ENCODE measurements at regions of chr20 and their contacts with region 1.

Region 1: DNA sequence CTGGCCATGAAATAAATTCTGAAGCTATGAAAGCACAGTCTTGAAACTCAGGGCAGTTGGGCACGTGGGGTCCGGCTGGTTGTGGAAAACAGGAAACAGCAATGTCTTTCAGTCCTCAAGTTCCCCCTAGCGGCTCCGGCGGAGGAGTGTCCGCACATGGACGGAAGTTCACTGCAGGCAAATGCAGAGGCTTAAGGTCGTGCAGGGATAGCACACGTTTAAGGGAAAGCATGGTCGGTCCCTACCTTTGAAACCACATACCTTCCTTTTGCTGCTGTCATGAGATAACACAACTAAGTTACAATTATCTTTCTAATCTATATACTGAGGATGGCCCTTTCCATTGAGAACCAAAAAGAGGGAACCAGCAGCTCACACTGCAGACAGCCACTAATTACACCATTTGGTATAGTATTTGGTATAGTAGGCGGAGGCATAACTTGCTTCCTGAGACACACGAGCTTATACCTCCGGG is 52.6 kb upstream of the NFATC2 start:
- DNase-seq: peak; percentile 97

Region 2: GRCh38 chr20:51393571-51393970 is 201.5 kb before region 1 on chr20:
- in situ Hi-C with region 1: loop called (anchors 10 kb)
- DNase-seq: no peak

Region 3: GRCh38 chr20:51497542-51498478 is 97.3 kb before region 1 on chr20:
- in situ Hi-C with region 1: loop called (anchors 10 kb)
- DNase-seq: peak; percentile 79

Region 4: DNA sequence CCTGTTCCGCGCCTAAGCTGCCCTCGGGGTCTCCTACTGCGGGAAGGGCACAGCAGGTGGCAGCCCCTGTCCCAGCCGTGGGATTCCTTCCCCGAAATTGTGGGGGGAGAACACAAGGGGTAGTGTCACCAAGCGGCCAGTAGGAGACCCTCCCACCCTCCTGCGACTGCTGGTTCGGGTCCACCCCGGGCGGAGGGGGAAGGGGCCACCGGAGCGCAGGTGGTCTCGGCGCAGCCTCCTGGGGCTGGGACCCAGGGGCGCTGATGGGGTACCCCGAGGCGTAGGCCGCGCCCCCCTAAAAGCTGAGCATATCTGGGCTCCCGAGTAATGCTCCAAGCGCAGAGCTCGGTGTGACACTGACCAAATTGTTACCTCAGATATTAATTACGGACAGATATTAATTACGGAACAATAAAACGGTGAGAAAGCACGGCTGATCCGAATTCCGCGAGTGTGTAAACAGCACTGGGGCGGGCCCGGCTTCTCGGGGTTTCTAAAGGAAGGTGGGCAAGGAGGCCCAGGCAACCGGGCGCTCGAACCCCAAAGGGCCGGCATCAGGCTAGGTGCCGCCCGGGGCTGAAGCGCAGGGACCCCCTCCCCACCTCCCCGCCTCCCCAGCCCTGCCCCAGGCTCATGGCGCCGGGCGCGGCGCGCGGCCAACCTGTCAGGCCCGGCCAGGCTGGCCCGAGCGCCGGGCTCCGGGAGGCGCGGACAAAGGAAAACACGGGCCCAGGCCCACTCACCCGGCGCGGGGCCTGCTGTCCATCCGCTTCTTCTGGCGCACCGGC is 172.7 kb after region 1 on chr20:
- in situ Hi-C with region 1: no loop called
- DNase-seq: peak; percentile 45